CD4-positive, alpha-beta memory T cell (primary cell): ENCODE measurements at regions of chr7 and their contacts with region 1.

Region 1: DNA sequence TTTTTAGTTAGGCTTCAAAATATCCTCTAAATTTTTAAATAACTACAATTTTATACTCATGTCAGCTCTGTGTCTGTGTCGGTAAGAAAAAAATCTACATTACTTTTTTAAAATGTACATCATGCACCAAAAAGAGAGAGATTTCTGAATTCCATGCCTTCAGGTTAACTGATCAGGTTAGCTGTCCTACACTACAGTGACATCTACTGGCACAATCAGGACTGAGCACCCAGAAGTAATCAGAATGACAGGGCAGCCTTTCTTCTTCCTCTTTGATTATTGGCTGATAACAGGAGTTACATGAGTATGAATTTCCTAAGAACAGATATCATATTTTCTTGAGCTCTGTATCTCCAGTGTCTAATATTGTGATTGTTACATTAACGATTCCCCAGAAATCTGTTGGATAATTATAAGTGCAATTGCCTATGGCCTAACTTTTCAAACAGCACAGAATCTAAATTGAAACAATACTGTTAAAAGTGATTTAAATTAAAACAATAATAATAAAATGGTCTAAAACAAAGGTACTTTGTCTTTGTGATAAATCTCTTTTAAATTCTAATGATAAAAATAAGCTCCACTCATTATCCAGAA is 41.8 kb upstream of the HYCC1 start:
- DNase-seq: peak; percentile 61 to 68 (median 66)
- H3K4me3 ChIP-seq: no peak overlapping the region
- H3K4me3 Mint-ChIP-seq: no peak overlapping the region
- H3K27ac ChIP-seq: no peak overlapping the region
- H3K27ac Mint-ChIP-seq: no peak overlapping the region
- H3K4me1 ChIP-seq: no peaks in the 10 kb centered on the region
- H3K4me1 Mint-ChIP-seq: peaks cover 0 to 2% (median 0%) of the 10 kb centered on the region in 4 donors
- H3K27me3 ChIP-seq: no peaks in the 10 kb centered on the region
- H3K27me3 Mint-ChIP-seq: peaks cover 1 to 2% of the 10 kb centered on the region in 2 donors

Region 2: DNA sequence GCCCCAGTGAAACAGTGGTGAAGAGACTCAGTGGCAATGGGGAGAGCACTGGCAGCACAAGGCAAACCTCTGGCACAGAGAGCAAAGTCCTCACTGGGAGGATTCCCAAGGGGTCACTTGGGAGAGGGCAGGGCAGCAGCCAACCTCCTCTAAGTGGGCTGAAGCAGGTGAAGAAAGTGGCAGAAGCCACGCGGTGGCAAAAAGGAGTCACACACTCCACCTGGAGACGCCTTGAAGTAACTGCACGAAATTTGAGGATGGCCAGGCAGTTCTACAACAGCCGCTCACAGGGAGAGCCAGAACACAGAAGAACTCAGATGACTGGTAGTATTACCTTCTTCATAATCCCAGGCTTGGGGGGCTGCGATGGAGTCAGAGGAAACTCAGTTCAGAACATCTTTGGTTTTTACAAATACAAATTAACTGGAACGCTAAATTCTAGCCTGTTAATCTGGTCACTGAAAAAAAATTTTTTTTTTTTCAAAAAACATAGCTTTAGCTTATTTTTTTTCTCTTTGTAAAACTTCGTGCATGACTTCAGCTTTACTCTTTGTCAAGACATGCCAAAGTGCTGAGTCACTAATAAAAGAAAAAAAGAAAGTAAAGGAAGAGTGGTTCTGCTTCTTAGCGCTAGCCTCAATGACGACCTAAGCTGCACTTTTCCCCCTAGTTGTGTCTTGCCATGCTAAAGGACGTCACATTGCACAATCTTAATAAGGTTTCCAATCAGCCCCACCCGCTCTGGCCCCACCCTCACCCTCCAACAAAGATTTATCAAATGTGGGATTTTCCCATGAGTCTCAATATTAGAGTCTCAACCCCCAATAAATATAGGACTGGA is 329.1 kb before region 1 on chr7:
- CTCF ChIA-PET with region 1: interaction called, 45 read pairs
- POLR2A ChIA-PET with region 1: no interaction called
- intact Hi-C with region 1: loop called (anchors 1 kb)
- DNase-seq: peak; percentile 50 to 59 (median 54)
- H3K4me3 ChIP-seq: no peak overlapping the region
- H3K4me3 Mint-ChIP-seq: peak overlapping the region; percentile 26 to 76 (median 66)
- H3K27ac ChIP-seq: no peak overlapping the region
- H3K27ac Mint-ChIP-seq: peak overlapping the region in 3 of 7 donors; percentile 5 to 88 (median 37)
- H3K4me1 ChIP-seq: peaks cover 17% of the 10 kb centered on the region
- H3K4me1 Mint-ChIP-seq: peaks cover 8 to 15% (median 11%) of the 10 kb centered on the region in 4 donors
- H3K27me3 ChIP-seq: no peaks in the 10 kb centered on the region
- H3K27me3 Mint-ChIP-seq: peaks cover 3 to 13% of the 10 kb centered on the region in 2 donors

Region 3: DNA sequence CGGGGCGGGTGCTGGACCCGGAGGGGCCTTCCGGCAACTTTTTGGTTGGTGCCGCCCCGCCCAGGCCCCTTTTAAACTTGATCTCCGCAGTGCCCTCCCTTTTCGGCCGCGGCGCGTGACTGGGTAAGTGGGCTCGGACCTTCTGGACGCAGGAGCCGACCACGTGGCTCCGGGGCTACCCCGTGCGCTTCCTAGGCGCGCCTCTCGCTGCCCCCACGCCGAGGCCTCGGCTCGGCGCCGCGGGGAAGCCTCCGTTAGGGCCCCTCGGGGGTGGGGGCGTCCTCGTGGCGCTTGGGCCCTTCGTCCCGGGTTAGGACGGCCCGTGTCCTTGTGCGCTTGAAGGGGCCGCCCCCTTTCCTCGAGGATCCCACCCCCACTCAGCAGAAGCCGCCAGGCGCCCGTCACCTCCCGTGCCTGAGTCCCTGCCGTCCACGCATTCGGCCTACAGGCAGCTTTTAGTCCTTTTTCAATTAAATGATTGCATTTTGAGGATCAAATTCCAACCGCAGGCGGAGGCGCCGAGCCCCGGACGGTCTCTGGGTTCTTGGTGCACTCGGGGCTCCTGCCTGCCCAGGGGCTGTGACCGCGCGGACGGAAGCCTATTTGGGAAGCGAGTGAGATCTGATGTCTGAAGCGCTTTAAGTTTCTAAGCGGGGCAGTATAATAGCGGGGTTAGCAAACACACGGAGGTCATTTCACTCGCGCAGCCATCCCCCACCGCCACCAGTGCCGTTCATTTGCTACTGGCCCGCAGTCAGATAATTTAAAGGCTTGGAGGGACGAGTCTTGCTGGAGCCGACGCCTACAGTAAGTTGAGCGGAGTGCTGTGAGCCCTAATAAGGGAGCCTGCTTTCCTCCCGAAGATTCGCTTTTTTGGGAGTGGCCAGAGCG is 201.3 kb before region 1 on chr7:
- CTCF ChIA-PET with region 1: interaction called, 17 read pairs
- POLR2A ChIA-PET with region 1: no interaction called
- intact Hi-C with region 1: loop called (anchors 1 kb)
- DNase-seq: peak; percentile 40 to 84 (median 77)
- H3K4me3 ChIP-seq: peak overlapping the region; percentile 63 to 93
- H3K4me3 Mint-ChIP-seq: peak overlapping the region; percentile 88 to 95 (median 95)
- H3K27ac ChIP-seq: peak overlapping the region; percentile 90
- H3K27ac Mint-ChIP-seq: peak overlapping the region; percentile 79 to 96 (median 93)
- H3K4me1 ChIP-seq: peaks cover 20% of the 10 kb centered on the region
- H3K4me1 Mint-ChIP-seq: peaks cover 8 to 20% (median 18%) of the 10 kb centered on the region in 4 donors
- H3K27me3 ChIP-seq: no peaks in the 10 kb centered on the region
- H3K27me3 Mint-ChIP-seq: peaks cover 0 to 2% of the 10 kb centered on the region in 2 donors

Region 4: DNA sequence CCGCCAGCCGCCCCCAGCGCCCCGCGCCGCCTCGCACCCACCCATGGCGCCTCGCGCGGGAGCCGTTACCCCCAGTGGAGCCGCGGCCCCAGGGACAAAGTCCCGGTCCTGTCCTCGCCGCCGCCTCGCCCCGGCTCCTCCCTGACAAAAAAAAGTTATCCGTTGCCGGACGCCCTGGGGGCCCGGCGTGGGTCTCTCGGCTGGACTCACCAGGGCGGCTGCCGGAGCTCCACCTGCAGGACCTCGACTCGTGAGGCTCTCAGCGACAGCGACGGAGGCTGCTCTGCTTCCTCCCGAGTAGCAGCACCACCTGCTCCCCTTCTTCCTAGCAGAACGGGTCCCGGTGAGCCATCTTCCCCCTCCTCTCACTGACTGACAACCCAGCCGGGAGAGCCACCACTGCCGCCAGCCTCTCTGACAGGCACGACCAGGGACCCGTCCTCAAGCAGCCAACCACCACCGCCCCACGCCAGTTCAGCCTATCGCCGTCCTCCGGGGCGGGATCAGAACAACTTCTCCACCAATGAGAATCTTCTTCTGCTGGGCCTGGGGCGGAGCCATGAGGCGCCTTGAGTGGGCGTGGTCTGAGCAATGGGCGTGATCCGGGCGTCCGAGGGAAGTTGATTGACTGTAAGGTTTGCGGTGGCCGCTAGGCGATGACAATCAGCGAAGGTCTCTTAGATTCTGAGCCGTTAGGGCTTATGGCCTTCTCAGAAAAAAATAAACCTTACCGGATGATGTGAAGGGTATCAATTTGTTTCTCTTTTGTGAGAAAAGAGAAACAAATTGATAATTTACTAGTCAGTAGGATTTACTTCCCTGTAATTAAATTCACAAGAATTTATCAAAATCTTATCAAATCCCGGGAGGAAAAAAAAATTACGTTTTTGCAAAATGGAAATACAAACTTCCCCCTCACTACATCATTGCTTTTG is 41.7 kb before region 1 on chr7 and contains the start of gene HYCC1:
- CTCF ChIA-PET with region 1: interaction called, 20 read pairs
- POLR2A ChIA-PET with region 1: interaction called, 3 read pairs
- intact Hi-C with region 1: loop called (anchors 1 kb)
- DNase-seq: peak; percentile 99 to 100 (median 100)
- H3K4me3 ChIP-seq: peak within 1 kb of the TSS; percentile 55 to 76
- H3K4me3 Mint-ChIP-seq: peak within 1 kb of the TSS; percentile 94 to 99 (median 97)
- H3K27ac ChIP-seq: peak within 1 kb of the TSS; percentile 58
- H3K27ac Mint-ChIP-seq: peak within 1 kb of the TSS; percentile 88 to 99 (median 93)
- H3K4me1 ChIP-seq: peaks cover 49% of the 10 kb centered on the region
- H3K4me1 Mint-ChIP-seq: peaks cover 12 to 28% (median 24%) of the 10 kb centered on the region in 4 donors
- H3K27me3 ChIP-seq: no peaks in the 10 kb centered on the region
- H3K27me3 Mint-ChIP-seq: peaks cover 0 to 2% of the 10 kb centered on the region in 2 donors
- total RNA-seq, gene HYCC1: 16.2 to 19.6 TPM

Region 5: DNA sequence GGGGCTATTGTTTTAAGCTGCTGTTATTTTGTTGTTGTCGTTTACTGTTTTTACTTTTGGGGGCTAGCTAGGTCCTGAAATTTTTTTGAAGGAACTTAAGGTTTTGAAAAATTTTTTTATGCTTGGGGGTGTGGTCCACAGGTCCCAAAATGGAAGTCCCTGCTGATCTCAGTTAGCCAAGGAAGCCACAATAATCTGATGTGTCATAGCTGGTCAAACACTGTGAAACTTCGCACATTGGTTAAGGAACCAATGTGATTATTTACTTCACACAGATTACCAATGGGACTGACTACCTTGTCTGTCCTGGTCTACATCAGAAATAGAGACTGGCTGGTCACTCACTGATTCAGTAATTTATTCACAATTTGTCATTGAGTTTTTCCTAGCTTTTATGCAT is 12.2 kb before region 1 on chr7:
- CTCF ChIA-PET with region 1: interaction called, 27 read pairs
- POLR2A ChIA-PET with region 1: no interaction called
- intact Hi-C with region 1: no loop called
- DNase-seq: no peak
- H3K4me3 ChIP-seq: no peak overlapping the region
- H3K4me3 Mint-ChIP-seq: no peak overlapping the region
- H3K27ac ChIP-seq: no peak overlapping the region
- H3K27ac Mint-ChIP-seq: no peak overlapping the region
- H3K4me1 ChIP-seq: no peaks in the 10 kb centered on the region
- H3K4me1 Mint-ChIP-seq: peaks cover 0 to 1% (median 0%) of the 10 kb centered on the region in 4 donors
- H3K27me3 ChIP-seq: no peaks in the 10 kb centered on the region
- H3K27me3 Mint-ChIP-seq: peaks cover 2 to 3% of the 10 kb centered on the region in 2 donors